Activated T-helper 2 cell treated with anti-CD3 and anti-CD28 coated beads, Interferon-gamma antibody, Interleukin-2, Interleukin-4, amounts not matched to agents 10 μg/mL and 5 μg/mL and 100 μg/mL, durations not matched to agents 14 hours and 24 hours and 36 hours (primary cell): ENCODE measurements at regions of chr14 and their contacts with region 1.

Region 1: DNA sequence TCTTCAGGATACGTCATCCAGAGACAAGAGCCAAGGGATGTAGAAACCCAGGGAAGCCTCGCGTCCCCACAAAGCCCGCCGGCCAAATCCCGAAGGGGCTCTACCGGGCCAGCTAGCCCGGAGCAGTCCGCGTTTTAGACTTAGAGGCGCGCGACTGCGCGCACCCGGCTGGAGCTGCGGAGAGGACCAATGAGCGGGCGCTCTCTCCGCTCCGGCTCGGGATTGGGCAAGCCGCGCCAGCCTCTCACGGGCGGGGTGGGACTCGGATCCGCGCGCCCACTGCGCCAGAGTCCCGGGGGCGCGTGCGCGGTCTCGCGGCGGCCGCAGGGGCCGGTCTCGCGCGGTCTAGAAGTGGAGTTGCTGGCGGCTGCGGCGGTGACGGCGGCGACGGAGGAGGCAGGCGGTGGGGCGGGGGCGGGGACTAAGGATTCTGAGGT is 239 bp upstream of the PALS1 start:
- DNase-seq: peak; percentile 92
- H3K4me3 Mint-ChIP-seq: peak overlapping the region; percentile 85
- H3K27ac Mint-ChIP-seq: peak overlapping the region; percentile 52
- H3K4me1 Mint-ChIP-seq: peaks cover 21% of the 10 kb centered on the region
- H3K27me3 Mint-ChIP-seq: peaks cover 31% of the 10 kb centered on the region

Region 2: GRCh38 chr14:67187210-67187609 is 53.8 kb before region 1 on chr14:
- intact Hi-C with region 1: loop called (anchors 5 kb)
- DNase-seq: no peak
- H3K4me3 Mint-ChIP-seq: no peak overlapping the region
- H3K27ac Mint-ChIP-seq: no peak overlapping the region
- H3K4me1 Mint-ChIP-seq: peaks cover 30% of the 10 kb centered on the region
- H3K27me3 Mint-ChIP-seq: no peaks in the 10 kb centered on the region

Region 3: DNA sequence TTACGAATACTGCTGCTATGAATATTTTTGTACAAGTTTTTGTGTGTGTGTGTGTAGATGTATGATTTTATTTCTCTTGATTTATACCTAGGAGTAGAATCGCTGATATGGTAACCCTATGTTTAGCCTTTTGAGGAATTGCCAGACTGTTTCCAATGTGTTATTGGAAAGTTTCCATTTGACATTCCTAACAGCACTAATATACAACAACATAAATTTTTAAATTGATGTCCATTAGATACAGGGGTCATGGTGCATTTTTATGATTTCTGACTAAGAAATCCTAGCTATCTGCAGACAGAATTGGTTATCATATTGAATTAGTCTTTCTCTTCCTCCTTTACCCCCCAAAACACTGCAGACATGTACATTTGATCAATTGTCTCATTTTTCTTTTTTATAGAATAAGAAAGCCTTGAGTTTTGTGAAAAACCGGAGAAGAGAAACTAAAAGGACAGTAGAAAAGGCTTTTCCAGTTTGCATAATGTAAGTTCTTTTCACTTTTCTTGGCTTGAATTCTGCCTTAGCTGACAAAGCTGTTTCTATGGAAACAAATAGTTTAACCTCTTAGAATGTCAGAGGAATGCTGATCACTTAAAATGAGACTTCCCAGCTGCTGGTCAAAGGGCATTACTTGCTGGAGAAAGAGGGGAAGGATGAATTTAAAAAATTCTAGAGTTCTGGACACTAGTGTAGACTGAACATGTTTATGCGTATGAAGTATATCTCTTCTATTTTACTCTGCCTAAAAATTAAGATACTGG is 28.5 kb after region 1 on chr14:
- intact Hi-C with region 1: no loop called
- DNase-seq: no peak
- H3K4me3 Mint-ChIP-seq: no peak overlapping the region
- H3K27ac Mint-ChIP-seq: no peak overlapping the region
- H3K4me1 Mint-ChIP-seq: peaks cover 19% of the 10 kb centered on the region
- H3K27me3 Mint-ChIP-seq: no peaks in the 10 kb centered on the region